Activated CD4-positive, alpha-beta T cell treated with anti-CD3 and anti-CD28 coated beads for 36 hours (primary cell): ENCODE measurements at regions of chr1 and their contacts with region 1.

Region 1: GRCh38 chr1:224513787-224514209 is 79.2 kb upstream of the WDR26 start:
- DNase-seq: peak; percentile 93
- ATAC-seq: peak; percentile 99
- H3K4me3 Mint-ChIP-seq: no peak overlapping the region
- H3K27ac Mint-ChIP-seq: no peak overlapping the region
- H3K4me1 Mint-ChIP-seq: peaks cover 3% of the 10 kb centered on the region
- H3K27me3 Mint-ChIP-seq: no peaks in the 10 kb centered on the region

Region 2: GRCh38 chr1:224497714-224498573 is 15.9 kb before region 1 on chr1:
- CTCF ChIA-PET with region 1: interaction called, 12 read pairs
- POLR2A ChIA-PET with region 1: interaction called, 3 read pairs
- intact Hi-C with region 1: no loop called
- DNase-seq: peak; percentile 88
- ATAC-seq: peak; percentile 97
- H3K4me3 Mint-ChIP-seq: peak overlapping the region; percentile 44
- H3K27ac Mint-ChIP-seq: peak overlapping the region; percentile 96
- H3K4me1 Mint-ChIP-seq: peaks cover 42% of the 10 kb centered on the region
- H3K27me3 Mint-ChIP-seq: no peaks in the 10 kb centered on the region

Region 3: GRCh38 chr1:224592636-224593582 is 79.1 kb after region 1 on chr1:
- CTCF ChIA-PET with region 1: interaction called, 10 read pairs
- POLR2A ChIA-PET with region 1: no interaction called
- intact Hi-C with region 1: no loop called
- DNase-seq: no peak
- ATAC-seq: no peak
- H3K4me3 Mint-ChIP-seq: no peak overlapping the region
- H3K27ac Mint-ChIP-seq: no peak overlapping the region
- H3K4me1 Mint-ChIP-seq: no peaks in the 10 kb centered on the region
- H3K27me3 Mint-ChIP-seq: no peaks in the 10 kb centered on the region

Region 4: DNA sequence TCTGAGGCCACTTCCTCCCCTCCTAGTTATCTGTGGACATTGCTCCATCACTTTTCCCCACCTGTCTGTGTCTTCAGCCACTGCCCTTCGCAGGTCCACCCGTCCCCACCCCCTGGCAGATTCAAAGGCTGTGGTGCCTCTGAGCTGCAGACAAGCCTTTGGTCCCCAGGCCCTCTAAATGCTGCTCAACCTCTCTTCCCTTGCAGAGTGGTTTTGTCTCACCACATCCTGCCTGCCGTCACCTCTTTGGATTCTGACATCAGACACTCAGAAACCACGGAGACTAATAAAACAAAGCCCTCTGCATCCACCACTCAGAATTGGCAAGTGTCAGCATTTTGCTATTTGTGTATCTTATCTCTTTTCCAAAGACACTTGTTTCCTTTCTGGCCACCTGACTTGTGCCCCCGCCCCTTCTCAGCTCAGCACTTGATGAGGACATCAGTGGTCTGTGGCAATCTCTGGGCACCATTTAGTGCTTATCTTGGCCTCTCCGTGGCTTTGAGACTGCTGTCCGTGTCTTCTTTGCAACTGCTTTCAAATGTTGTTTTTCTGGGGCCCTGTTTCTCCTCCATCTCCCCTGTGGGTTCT is 110.0 kb after region 1 on chr1:
- CTCF ChIA-PET with region 1: interaction called, 3 read pairs
- POLR2A ChIA-PET with region 1: no interaction called
- intact Hi-C with region 1: loop called in 1 of 2 experiments (anchors 5 kb)
- DNase-seq: peak; percentile 87
- ATAC-seq: peak; percentile 92
- H3K4me3 Mint-ChIP-seq: peak overlapping the region; percentile 45
- H3K27ac Mint-ChIP-seq: peak overlapping the region; percentile 96
- H3K4me1 Mint-ChIP-seq: peaks cover 25% of the 10 kb centered on the region
- H3K27me3 Mint-ChIP-seq: peaks cover 25% of the 10 kb centered on the region

Region 5: DNA sequence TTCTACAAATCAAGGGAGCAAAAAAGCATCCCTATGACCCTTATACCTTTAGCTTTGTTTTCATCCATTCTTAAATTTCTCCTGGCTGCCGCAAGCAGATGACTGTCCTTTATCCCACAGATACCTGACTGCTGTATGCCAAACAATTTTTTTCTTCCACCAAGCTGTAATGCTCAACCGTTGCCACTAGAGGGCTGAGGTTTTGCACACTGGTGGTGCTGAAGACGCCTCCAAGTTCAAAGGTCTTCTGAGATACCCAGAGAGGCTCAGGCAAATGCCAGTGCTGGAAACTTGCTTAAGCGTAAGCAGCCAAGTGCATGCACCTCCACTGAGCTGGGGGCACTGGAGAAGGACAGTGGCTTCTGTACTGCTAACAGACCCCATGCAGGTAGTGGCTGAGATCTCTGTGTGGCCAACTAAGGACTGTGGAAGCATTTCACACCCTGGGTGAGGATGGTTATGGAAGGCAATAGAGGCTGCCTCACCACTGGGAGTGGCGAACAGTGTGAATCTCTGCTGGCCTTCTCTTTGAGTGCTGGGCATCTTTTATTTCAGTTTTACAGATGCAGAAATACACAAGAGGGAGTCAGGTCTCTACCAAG is 130.9 kb after region 1 on chr1:
- CTCF ChIA-PET with region 1: interaction called, 6 read pairs
- POLR2A ChIA-PET with region 1: no interaction called
- intact Hi-C with region 1: loop called (anchors 1 to 5 kb)
- DNase-seq: peak; percentile 74
- ATAC-seq: peak; percentile 85
- H3K4me3 Mint-ChIP-seq: no peak overlapping the region
- H3K27ac Mint-ChIP-seq: no peak overlapping the region
- H3K4me1 Mint-ChIP-seq: no peaks in the 10 kb centered on the region
- H3K27me3 Mint-ChIP-seq: no peaks in the 10 kb centered on the region

Region 6: DNA sequence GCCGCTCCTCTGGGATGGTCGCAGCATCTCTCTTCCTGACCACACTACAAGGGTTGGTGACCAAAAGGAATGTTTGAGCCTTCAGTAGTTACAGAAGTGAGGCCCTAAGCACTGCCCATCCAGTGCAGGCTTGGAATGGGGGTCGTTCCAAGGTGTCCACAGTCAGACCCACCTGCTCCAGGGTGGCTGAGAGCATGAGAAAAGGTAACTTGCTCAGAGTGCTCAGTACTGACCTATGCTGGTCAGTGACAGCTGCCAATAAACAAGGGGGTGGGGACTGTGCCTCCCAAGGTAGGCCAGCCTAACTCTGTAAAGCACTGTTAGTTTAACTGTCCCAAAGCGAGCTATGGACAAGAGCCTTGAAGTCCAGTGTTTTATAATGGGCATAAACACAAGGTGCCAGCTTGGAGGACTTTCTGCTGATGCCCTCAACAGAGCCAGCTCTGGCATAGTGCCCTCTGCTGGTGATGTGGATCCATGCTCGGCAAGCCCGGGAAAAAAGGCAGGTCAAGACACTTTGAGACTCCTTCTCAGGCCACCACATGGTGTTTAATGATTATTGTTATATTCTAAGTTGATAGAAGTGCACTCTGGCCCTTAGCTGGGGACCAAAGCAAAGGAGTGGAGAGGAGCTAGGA is 337.5 kb after region 1 on chr1:
- CTCF ChIA-PET with region 1: interaction called, 40 read pairs
- POLR2A ChIA-PET with region 1: no interaction called
- intact Hi-C with region 1: loop called (anchors 1 kb)
- DNase-seq: peak; percentile 77
- ATAC-seq: peak; percentile 60
- H3K4me3 Mint-ChIP-seq: no peak overlapping the region
- H3K27ac Mint-ChIP-seq: no peak overlapping the region
- H3K4me1 Mint-ChIP-seq: no peaks in the 10 kb centered on the region
- H3K27me3 Mint-ChIP-seq: peaks cover 2% of the 10 kb centered on the region

Region 7: GRCh38 chr1:224922404-224923164 is 408.8 kb after region 1 on chr1:
- CTCF ChIA-PET with region 1: interaction called, 41 read pairs
- POLR2A ChIA-PET with region 1: no interaction called
- intact Hi-C with region 1: loop called (anchors 1 kb)
- DNase-seq: no peak
- ATAC-seq: peak; percentile 57
- H3K4me3 Mint-ChIP-seq: no peak overlapping the region
- H3K27ac Mint-ChIP-seq: no peak overlapping the region
- H3K4me1 Mint-ChIP-seq: no peaks in the 10 kb centered on the region
- H3K27me3 Mint-ChIP-seq: peaks cover 8% of the 10 kb centered on the region